Mammary epithelial cell (primary cell): ENCODE measurements at regions of chr7 and their contacts with region 1.

Region 1: GRCh38 chr7:92584996-92585395 is 5.2 kb downstream of the FAM133B start:
- DNase-seq: no peak
- H3K4me3 ChIP-seq: no peak overlapping the region
- H3K27ac ChIP-seq: peak overlapping the region; percentile 2
- H3K4me1 ChIP-seq: peaks cover 15% of the 10 kb centered on the region
- H3K27me3 ChIP-seq: no peaks in the 10 kb centered on the region
- CTCF ChIP-seq: no peak

Region 2: GRCh38 chr7:92547579-92547978 is 37.4 kb before region 1 on chr7:
- CTCF ChIA-PET with region 1: no interaction called
- dilution Hi-C with region 1: loop called (anchors 5 kb)
- in situ Hi-C with region 1: no loop called
- intact Hi-C with region 1: no loop called
- DNase-seq: no peak
- H3K4me3 ChIP-seq: no peak overlapping the region
- H3K27ac ChIP-seq: no peak overlapping the region
- H3K4me1 ChIP-seq: no peaks in the 10 kb centered on the region
- H3K27me3 ChIP-seq: no peaks in the 10 kb centered on the region
- CTCF ChIP-seq: no peak

Region 3: GRCh38 chr7:92778972-92779371 is 194.0 kb after region 1 on chr7:
- CTCF ChIA-PET with region 1: no interaction called
- dilution Hi-C with region 1: no loop called
- in situ Hi-C with region 1: no loop called
- intact Hi-C with region 1: no loop called
- DNase-seq: peak; percentile 32
- H3K4me3 ChIP-seq: no peak overlapping the region
- H3K27ac ChIP-seq: peak overlapping the region; percentile 1
- H3K4me1 ChIP-seq: peaks cover 13% of the 10 kb centered on the region
- H3K27me3 ChIP-seq: no peaks in the 10 kb centered on the region
- CTCF ChIP-seq: peak in 1 of 2 donors; percentile 21